A673 (cell line): ENCODE measurements at regions of chr3 and their contacts with region 1.

Region 1: GRCh38 chr3:89289574-89290190 is 182.3 kb downstream of the EPHA3 start:
- DNase-seq: no peak
- H3K4me3 ChIP-seq: no peak overlapping the region
- H3K27ac ChIP-seq: no peak overlapping the region
- H3K4me1 ChIP-seq: no peaks in the 10 kb centered on the region
- H3K27me3 ChIP-seq: no peaks in the 10 kb centered on the region
- CTCF ChIP-seq: no peak

Region 2: DNA sequence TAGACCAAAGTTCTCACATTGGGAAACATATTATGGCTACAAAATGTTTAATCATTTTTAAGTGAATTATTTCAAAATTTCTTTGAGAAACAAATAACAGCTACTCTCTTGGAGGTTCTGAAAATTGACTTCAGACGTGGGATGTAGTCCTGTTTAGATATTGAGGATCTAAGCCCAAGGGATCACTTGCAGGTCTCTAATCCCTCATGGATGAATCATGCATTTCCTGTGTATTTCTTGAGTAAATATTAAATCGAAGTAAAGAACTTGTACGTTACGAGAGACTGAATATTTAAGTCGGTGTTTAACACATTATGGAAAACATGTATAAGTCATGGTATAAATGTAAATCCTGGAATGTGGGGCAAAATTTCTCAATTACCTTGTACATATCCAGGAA is 62.5 kb before region 1 on chr3:
- CTCF ChIA-PET with region 1: no interaction called
- POLR2A ChIA-PET with region 1: no interaction called
- intact Hi-C with region 1: loop called (anchors 5 kb)
- DNase-seq: peak; percentile 84
- H3K4me3 ChIP-seq: no peak overlapping the region
- H3K27ac ChIP-seq: no peak overlapping the region
- H3K4me1 ChIP-seq: peaks cover 58% of the 10 kb centered on the region
- H3K27me3 ChIP-seq: no peaks in the 10 kb centered on the region
- CTCF ChIP-seq: no peak

Region 3: GRCh38 chr3:89246326-89246725 is 43.4 kb before region 1 on chr3:
- CTCF ChIA-PET with region 1: no interaction called
- POLR2A ChIA-PET with region 1: no interaction called
- intact Hi-C with region 1: no loop called
- DNase-seq: no peak
- H3K4me3 ChIP-seq: no peak overlapping the region
- H3K27ac ChIP-seq: no peak overlapping the region
- H3K4me1 ChIP-seq: peaks cover 28% of the 10 kb centered on the region
- H3K27me3 ChIP-seq: no peaks in the 10 kb centered on the region
- CTCF ChIP-seq: 0 out of 2 replicates have a peak, but pooled peaks have one; percentile 13